Head of caudate nucleus (tissue), 42 donors: ENCODE measurements at regions of chr16 and their contacts with region 1.

Region 1: GRCh38 chr16:2882460-2883026 is 472 bp upstream of the FLYWCH2 start:
- DNase-seq: peak; percentile 93 to 99 (median 98)

Region 2: DNA sequence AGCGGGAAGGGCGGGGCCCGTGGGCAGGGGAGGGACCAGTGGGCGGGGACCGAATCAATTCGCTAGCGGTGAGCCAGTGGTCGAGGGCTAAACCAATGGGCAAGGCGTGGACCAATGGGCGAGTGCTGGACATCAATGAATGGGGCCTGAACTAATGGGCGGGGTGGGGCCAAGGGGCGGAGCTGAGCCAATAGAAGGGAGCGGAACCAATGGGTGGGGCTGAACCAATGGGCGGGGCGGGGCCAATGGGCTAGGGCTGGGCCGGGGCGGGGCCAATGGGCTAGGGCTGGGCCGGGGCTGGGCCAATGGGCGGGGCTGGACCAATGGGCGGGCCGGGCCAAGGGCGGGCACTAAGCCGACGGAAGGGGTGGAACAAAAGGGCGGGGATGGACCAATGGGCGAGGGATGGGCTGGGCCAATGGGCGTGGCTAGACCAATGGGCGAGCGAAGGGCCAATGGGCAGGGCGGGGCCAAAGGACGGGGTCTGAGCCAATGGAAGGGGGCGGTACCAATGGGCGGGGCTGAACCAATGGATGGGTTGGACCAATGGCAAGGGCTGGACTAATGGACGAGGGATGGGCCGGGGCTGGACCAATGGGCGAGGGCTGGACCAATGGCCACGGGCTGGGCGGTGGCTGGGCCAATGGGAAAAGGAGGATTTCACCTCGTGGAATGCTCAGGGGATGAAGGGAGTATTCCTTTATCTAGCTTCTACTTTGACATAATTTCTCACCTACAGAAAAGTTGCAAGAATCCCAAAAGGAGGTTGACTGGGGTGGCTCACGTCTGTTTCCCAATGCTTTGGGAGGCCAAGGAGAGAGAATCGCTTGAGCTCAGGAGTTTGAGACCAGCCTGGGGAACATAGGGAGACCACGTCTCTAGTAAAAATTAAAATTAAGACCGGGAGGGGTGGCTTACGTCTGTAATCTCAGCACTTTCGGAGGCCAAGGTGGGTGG is 23.2 kb after region 1 on chr16:
- intact Hi-C with region 1: loop called (anchors 1 kb)
- DNase-seq: peak; percentile 99 to 100 (median 100)